ENCODE measurements at regions of chr17 and their contacts with region 1.

Region 1: GRCh38 chr17:74864866-74865395 is 5.2 kb upstream of the GRIN2C start:
- DNase-seq: peak; percentile 54
- H3K4me3 Mint-ChIP-seq: no peak overlapping the region
- H3K27ac Mint-ChIP-seq: no peak overlapping the region
- H3K4me1 Mint-ChIP-seq: peaks cover 8% of the 10 kb centered on the region
- H3K27me3 Mint-ChIP-seq: peaks cover 15% of the 10 kb centered on the region

Region 2: DNA sequence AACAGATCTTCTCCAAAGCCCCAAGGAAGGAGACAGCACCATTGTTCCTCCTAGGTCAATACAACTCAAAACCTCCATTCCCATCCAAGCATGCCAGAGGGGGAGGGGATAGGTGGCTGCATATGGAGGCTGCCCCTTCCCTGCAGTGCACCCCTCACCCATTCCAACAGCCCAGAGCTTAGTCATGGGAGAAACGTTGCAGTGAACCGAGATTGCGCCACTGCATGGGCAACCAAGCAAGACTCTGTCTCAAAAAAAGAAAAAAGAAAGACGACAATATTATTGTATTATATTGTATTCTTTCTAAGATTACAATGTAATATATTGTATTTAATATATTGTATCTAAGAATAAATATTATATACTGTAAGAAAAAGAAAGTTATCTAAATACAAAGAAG is 205.0 kb before region 1 on chr17:
- intact Hi-C with region 1: loop called (anchors 1 kb)
- DNase-seq: no peak
- H3K4me3 Mint-ChIP-seq: no peak overlapping the region
- H3K27ac Mint-ChIP-seq: no peak overlapping the region
- H3K4me1 Mint-ChIP-seq: peaks cover 8% of the 10 kb centered on the region
- H3K27me3 Mint-ChIP-seq: peaks cover 59% of the 10 kb centered on the region

Region 3: GRCh38 chr17:74790161-74791054 is 74.5 kb before region 1 on chr17:
- intact Hi-C with region 1: loop called (anchors 1 kb)
- DNase-seq: no peak
- H3K4me3 Mint-ChIP-seq: no peak overlapping the region
- H3K27ac Mint-ChIP-seq: peak overlapping the region; percentile 47
- H3K4me1 Mint-ChIP-seq: peaks cover 39% of the 10 kb centered on the region
- H3K27me3 Mint-ChIP-seq: no peaks in the 10 kb centered on the region

Region 4: DNA sequence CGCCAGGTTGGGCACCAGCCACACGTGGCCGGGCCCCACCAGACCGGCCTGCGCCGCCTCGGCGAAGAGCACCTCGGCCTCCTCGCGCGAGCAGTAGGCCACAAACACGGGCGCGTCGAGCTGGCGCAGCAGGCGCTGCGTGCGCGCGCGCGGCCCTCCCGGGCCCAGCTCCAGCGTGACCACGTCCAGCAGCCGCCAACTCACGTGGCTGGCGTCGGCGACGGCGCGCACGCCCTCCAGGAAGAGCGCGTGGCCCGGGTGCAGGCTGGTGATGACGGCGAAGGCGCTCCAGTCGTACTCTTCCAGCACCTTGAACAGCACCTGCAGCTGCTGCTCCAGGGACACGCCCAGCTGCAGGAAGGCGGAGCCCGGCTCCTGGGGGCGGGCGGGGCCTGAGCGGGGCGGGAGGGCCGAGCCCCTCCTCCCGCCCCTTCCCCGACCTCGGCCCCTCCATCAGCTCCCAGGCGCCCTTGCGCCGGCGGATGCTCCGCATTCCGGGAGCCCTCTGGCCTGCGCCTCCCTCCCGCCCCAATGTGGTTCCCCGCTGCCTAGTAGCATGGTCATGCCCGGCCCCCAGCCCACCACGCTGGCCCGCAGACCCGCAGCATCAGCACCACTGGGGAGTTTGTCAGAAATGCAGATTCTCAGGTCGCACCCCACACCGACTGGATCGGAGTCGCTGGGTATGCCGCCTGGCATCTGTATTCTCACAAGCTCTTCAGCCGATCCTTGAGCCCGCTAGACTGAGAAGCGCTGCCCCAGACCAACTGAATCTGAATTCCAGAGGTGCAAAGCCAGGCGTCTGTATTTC is 12.5 kb before region 1 on chr17:
- intact Hi-C with region 1: loop called (anchors 1 kb)
- DNase-seq: peak; percentile 72
- H3K4me3 Mint-ChIP-seq: peak overlapping the region; percentile 86
- H3K27ac Mint-ChIP-seq: peak overlapping the region; percentile 52
- H3K4me1 Mint-ChIP-seq: peaks cover 11% of the 10 kb centered on the region
- H3K27me3 Mint-ChIP-seq: peaks cover 19% of the 10 kb centered on the region

Region 5: DNA sequence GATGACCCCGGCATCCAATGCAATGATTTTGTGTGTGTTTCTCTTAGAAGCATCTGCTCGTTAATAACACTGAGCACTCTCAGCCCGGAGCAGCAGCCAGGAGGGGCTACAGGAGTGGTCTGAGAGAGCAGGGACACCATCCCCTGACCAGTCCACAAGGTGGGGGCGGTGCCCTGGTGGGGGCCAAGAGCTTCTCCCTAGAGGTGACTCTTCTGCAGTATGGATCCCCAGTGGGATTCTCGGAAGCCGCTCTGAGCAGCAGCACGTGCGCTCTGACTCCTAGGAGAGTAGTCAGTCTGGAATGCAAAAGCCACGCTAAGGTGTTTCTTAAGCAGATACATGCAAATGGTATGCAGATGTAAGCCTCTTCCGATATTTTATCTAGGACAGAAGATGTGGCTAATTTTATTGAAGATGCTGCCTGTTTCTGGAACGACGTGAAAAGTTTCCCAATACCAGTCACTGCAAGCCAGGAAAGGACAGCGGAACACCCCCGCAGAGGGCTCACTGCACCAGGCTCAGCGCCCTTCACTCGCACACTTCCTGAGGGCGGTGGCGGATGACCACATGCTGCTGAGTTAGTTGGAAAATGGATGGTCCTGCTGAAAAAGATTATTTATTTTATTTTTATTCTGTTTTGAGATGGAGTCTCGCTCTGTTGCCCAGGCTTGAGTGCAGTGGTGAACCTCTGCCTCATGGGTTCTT is 18.3 kb after region 1 on chr17:
- intact Hi-C with region 1: no loop called
- DNase-seq: no peak
- H3K4me3 Mint-ChIP-seq: no peak overlapping the region
- H3K27ac Mint-ChIP-seq: no peak overlapping the region
- H3K4me1 Mint-ChIP-seq: no peaks in the 10 kb centered on the region
- H3K27me3 Mint-ChIP-seq: peaks cover 10% of the 10 kb centered on the region

Region 6: GRCh38 chr17:74981979-74982662 is 117.2 kb after region 1 on chr17:
- intact Hi-C with region 1: no loop called
- DNase-seq: peak; percentile 79
- H3K4me3 Mint-ChIP-seq: peak overlapping the region; percentile 89
- H3K27ac Mint-ChIP-seq: peak overlapping the region; percentile 74
- H3K4me1 Mint-ChIP-seq: peaks cover 17% of the 10 kb centered on the region
- H3K27me3 Mint-ChIP-seq: peaks cover 61% of the 10 kb centered on the region

Measured in activated T-helper 1 cell treated with anti-CD3 and anti-CD28 coated beads, Interleukin-12 subunit alpha, Interleukin-12 subunit beta, Interleukin-2, Interleukin-4 antibody, amounts not matched to agents 30 ng/mL and 10 ng/mL and 1 ng/mL, durations not matched to agents 14 hours and 24 hours and 36 hours (primary cell).